ENCODE measurements at regions of chr1 and their contacts with region 1.

Region 1: DNA sequence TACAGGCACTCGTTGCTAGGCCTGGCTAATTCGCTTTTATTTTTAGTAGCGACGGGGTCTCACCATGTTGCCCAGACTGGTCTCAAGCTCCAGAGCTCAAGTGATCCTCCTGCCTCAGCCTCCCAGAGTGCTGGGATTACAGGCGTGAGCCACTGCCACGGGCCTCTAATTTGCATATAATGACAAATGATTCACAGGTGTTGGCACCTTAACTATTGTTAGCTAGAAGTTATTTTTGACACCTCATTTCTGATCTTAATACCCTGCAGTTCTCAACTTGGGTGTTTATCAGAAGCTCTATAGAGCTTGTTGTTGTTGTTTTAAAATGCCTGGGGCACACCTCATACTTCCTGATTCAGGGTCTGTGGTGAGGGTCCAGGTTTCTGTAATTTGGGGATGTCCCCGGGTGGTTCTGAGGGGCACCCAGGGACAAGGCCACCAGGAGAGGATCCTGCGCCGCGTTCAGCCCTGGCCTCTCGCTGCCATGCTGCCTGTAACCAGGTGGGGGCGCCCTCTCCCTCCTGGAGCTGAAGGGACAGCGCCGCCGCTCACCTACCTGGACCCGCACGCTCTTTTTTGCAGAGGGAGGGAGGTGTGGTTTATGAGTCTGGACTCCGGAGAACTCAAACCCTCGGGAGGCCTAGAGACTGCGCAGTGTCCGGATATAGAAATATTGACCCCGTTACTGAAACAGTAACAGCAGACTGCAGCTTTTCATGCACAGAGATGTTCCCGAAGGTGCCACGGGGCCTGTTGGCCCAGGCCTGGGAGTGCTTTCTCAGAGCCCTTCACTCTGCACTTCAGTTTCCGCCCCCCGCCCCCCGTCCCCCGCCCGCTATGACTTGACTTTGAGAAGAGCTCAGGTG is 23.0 kb upstream of the NEK2 start:
- DNase-seq: peak; percentile 51 to 86
- H3K4me3 ChIP-seq: no peak overlapping the region
- H3K27ac ChIP-seq: no peak overlapping the region
- H3K4me1 ChIP-seq: no peaks in the 10 kb centered on the region
- H3K27me3 ChIP-seq: no peaks in the 10 kb centered on the region
- CTCF ChIP-seq: peak; percentile 96

Region 2: GRCh38 chr1:211724687-211725196 is 26.3 kb after region 1 on chr1:
- CTCF ChIA-PET with region 1: no interaction called
- POLR2A ChIA-PET with region 1: no interaction called
- intact Hi-C with region 1: no loop called
- DNase-seq: no peak
- H3K4me3 ChIP-seq: no peak overlapping the region
- H3K27ac ChIP-seq: no peak overlapping the region
- H3K4me1 ChIP-seq: 0 out of 2 replicates have a peak, but pooled peaks cover 4% of the 10 kb centered on the region
- H3K27me3 ChIP-seq: no peaks in the 10 kb centered on the region
- CTCF ChIP-seq: no peak

Region 3: GRCh38 chr1:211830330-211831142 is 132.1 kb after region 1 on chr1 and contains the start of gene LPGAT1:
- CTCF ChIA-PET with region 1: no interaction called
- POLR2A ChIA-PET with region 1: no interaction called
- intact Hi-C with region 1: loop called (anchors 1 kb)
- DNase-seq: peak in 1 of 2 experiments; percentile 80
- H3K4me3 ChIP-seq: peak within 1 kb of the TSS; percentile 75
- H3K27ac ChIP-seq: peak within 1 kb of the TSS; percentile 29; the same call in 1 of the 2 replicates
- H3K4me1 ChIP-seq: peaks cover 15% of the 10 kb centered on the region; the same call in 1 of the 2 replicates
- H3K27me3 ChIP-seq: no peaks in the 10 kb centered on the region
- CTCF ChIP-seq: peak; percentile 62
- total RNA-seq, gene LPGAT1: 46.0 and 46.8 TPM in 2 replicates

Region 4: DNA sequence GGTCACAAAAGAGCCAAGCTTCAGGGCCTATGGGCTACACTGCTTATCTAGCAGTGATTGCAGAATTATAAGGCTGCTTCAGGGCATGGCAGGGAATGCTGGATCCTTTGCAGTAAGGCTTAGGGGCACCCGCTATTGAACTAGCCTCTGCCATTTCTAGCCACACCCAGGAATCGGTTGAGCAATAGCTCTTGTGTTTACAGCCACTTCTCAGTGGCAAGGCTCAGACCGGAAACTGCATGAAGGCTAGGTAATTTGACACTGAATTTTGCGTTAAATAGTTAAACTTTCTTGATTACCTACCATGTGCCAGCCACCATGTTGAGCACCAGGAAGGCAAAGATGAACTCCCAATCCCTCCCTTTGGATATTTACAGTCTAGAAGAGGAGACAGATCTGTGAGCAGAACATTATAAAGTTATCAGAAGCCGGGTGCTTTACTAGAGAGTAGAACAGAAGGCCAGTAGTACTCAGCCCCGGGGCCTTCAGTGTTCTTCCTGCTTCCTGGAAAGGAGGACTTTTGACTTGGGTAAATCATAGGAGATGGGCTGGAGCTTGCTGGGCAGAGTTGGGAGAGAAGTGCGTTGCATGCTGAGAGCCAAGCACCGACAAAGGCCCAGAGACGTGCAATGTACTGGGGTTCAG is 230.7 kb after region 1 on chr1:
- CTCF ChIA-PET with region 1: no interaction called
- POLR2A ChIA-PET with region 1: no interaction called
- intact Hi-C with region 1: loop called (anchors 5 kb)
- DNase-seq: peak; percentile 48 to 83
- H3K4me3 ChIP-seq: no peak overlapping the region
- H3K27ac ChIP-seq: peak overlapping the region; percentile 71
- H3K4me1 ChIP-seq: peaks cover 51% of the 10 kb centered on the region
- H3K27me3 ChIP-seq: no peaks in the 10 kb centered on the region
- CTCF ChIP-seq: no peak

Region 5: GRCh38 chr1:211944733-211945500 is 246.5 kb after region 1 on chr1:
- CTCF ChIA-PET with region 1: interaction called, 4 read pairs
- POLR2A ChIA-PET with region 1: no interaction called
- intact Hi-C with region 1: loop called (anchors 1 kb)
- DNase-seq: peak in 1 of 2 experiments; percentile 48
- H3K4me3 ChIP-seq: no peak overlapping the region
- H3K27ac ChIP-seq: no peak overlapping the region
- H3K4me1 ChIP-seq: no peaks in the 10 kb centered on the region
- H3K27me3 ChIP-seq: no peaks in the 10 kb centered on the region
- CTCF ChIP-seq: no peak

Region 6: DNA sequence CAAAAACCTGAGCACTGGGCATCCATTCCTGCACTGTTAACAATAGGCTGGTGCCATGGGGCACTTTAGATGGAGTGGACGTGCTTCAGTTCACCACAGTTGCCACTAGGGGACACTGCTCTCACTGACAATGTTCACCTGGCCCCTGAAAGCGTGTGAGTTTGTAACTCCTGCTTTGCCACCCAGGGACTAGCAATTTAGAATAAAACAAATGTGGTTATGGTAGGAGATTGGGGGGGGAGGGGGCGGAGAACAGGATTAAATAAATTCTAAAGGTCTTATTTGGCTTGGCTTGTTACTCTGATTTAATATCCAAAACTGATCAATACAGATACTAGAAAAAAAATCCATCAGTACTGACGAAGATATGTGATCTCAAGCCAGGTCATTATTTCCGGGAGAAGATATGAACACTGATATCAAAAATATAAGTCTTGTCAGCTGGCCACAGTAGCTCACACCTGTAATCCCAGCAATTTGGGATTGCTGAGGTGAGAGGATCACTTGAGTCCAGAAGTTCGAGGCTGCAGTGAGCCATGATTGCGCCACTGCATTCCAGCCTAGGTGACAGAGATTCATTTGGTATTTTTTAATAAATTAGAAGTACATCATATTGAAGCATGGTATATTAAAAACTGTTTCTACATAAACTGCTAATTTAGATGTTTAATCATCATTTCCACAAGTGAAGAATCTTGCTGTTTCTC is 313.8 kb after region 1 on chr1:
- CTCF ChIA-PET with region 1: no interaction called
- POLR2A ChIA-PET with region 1: no interaction called
- intact Hi-C with region 1: loop called (anchors 5 kb)
- DNase-seq: peak; percentile 49 to 53
- H3K4me3 ChIP-seq: no peak overlapping the region
- H3K27ac ChIP-seq: no peak overlapping the region
- H3K4me1 ChIP-seq: peaks cover 9% of the 10 kb centered on the region; the same call in 1 of the 2 replicates
- H3K27me3 ChIP-seq: no peaks in the 10 kb centered on the region
- CTCF ChIP-seq: peak; percentile 93

Region 7: GRCh38 chr1:212035123-212035834 is 336.9 kb after region 1 on chr1 and contains the starts of genes DTL and INTS7:
- CTCF ChIA-PET with region 1: interaction called, 4 read pairs
- POLR2A ChIA-PET with region 1: no interaction called
- intact Hi-C with region 1: loop called (anchors 1 kb)
- DNase-seq: peak; percentile 97 to 98
- H3K4me3 ChIP-seq: peak within 1 kb of the TSS; percentile 93
- H3K27ac ChIP-seq: peak within 1 kb of the TSS; percentile 55
- H3K4me1 ChIP-seq: peaks cover 50% of the 10 kb centered on the region
- H3K27me3 ChIP-seq: no peaks in the 10 kb centered on the region
- CTCF ChIP-seq: peak; percentile 81
- total RNA-seq, gene DTL: 22.5 TPM in 2 replicates
- total RNA-seq, gene INTS7: 18.4 and 24.7 TPM in 2 replicates